ENCODE measurements at regions of chr14 and their contacts with region 1.

Region 1: DNA sequence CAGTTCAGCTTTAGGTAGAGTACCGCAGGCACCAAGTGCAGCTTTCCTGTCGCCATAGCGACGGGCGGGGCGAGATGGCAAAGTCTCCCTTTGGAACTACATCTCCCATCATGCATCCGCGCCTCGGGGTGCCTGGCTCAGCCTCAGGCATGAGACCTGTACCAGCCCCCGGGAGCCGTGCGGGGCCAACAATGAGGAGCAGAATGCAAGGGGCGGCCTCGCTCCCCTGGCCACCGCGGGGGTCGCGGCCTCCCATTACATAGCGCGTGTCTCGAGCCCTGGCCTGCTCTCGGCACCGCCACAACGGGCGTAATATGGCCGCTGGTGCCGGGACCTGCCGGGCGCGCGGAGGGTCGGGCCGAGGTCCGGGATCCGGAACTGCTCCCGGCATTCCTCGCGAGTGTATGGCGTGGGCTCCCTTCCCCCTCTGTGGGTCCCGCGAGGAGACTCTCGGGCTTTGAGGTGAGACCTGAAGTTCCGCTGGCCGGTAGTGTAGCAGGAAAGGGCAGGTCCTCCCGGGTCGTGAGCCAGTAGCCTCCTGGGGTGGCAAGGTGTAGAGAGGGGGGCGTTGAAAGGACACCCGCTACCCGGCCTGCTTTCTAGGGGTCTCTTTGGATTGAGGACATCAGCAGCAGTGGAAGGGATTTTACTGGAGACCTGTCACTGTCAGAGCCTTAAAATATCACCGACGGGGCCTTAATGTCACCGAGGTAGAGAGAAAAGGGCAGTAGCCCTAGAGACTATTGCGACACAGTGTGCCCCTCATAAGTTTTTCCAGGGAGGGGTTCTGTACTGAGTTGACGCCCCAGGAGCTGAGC is at the start of gene THTPA:
- DNase-seq: peak; percentile 91 to 95
- ATAC-seq: peak; percentile 86 to 90
- H3K4me3 ChIP-seq: peak within 1 kb of the TSS; percentile 93
- H3K27ac ChIP-seq: peak within 1 kb of the TSS; percentile 98 to 100
- H3K4me1 ChIP-seq: peaks cover 16% of the 10 kb centered on the region; the same call in 2 of the 3 replicates
- CTCF ChIP-seq: no peak
- EP300 ChIP-seq: no peak
- POLR2A ChIP-seq: peak; percentile 75
- RAD21 ChIP-seq: no peak
- polyA plus RNA-seq, gene THTPA: 8.1 and 15.3 TPM in 2 replicates

Region 2: DNA sequence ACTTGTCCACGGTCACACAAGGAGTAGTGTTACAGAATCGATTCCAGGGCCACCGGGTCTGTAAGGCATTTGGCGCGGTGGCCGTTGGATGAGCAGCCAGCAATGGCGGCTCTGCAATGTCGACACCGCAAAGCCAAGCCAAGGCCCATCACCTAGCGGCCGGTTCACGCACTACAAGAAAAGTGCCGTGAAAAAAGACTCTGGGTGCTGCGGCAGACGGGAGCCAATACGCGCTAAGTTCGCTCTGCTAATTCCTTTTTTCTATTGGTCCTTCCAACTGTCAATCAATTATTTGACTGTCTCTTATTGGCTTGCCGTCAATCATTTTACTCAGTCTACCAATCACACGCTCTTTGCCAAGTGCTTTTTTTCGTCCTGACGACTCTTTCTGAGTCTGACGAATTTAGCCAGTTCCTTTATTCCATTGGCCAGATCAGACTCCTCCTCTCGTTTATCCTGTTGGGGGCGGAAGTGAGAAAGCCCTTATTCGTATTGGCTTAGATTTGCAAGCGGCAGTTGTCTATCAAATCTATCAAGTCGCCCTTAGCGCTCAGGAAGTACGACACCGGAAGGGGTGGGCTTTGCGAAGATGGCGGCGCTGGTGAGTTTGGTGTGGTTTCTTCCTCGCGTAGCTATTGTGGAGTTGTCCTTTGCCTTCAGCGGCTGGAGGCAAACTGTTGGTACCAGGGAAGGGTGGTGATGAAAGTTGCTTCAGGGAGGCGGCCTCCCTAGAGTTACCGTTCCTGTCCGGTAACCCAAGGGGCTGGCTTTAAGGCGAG is 86.8 kb before region 1 on chr14 and contains the start of gene NGDN:
- CTCF ChIA-PET with region 1: interaction called, 553 read pairs
- POLR2A ChIA-PET with region 1: interaction called, 4 read pairs
- DNase-seq: peak; percentile 98 to 100
- ATAC-seq: peak; percentile 96 to 97
- H3K4me3 ChIP-seq: peak within 1 kb of the TSS; percentile 87
- H3K27ac ChIP-seq: peak within 1 kb of the TSS; percentile 77 to 87
- H3K4me1 ChIP-seq: peaks cover 10% of the 10 kb centered on the region; the same call in 2 of the 3 replicates
- CTCF ChIP-seq: peak; percentile 59
- EP300 ChIP-seq: no peak
- POLR2A ChIP-seq: peak; percentile 77
- RAD21 ChIP-seq: peak; percentile 30 to 39; a peak in 3 of 5 replicates
- polyA plus RNA-seq, gene NGDN: 99.5 and 108 TPM in 2 replicates

Region 3: DNA sequence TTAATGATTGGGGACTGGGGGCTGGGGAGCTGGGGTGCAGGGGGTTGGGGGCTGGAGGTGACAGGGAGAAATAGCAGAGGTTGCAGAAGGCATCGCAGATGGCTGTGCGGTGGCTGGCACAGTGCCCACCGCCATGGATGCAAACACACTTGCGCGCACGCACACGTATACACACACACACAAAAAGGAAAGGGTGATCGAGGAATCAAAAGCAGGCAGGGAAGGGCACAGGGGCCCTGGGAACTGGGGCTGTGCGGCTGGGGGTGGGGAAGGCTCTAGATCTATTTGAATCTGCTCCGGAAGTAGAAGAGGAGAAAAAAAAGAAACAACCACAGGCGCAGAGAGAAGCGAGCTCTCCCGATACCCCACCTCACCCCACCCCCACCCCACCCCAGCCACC is 43.9 kb before region 1 on chr14:
- CTCF ChIA-PET with region 1: interaction called, 19 read pairs
- POLR2A ChIA-PET with region 1: interaction called, 3 read pairs
- DNase-seq: no peak
- ATAC-seq: no peak
- H3K4me3 ChIP-seq: no peak overlapping the region
- H3K27ac ChIP-seq: no peak overlapping the region
- H3K4me1 ChIP-seq: no peaks in the 10 kb centered on the region
- CTCF ChIP-seq: no peak
- EP300 ChIP-seq: no peak
- POLR2A ChIP-seq: no peak
- RAD21 ChIP-seq: no peak

Region 4: DNA sequence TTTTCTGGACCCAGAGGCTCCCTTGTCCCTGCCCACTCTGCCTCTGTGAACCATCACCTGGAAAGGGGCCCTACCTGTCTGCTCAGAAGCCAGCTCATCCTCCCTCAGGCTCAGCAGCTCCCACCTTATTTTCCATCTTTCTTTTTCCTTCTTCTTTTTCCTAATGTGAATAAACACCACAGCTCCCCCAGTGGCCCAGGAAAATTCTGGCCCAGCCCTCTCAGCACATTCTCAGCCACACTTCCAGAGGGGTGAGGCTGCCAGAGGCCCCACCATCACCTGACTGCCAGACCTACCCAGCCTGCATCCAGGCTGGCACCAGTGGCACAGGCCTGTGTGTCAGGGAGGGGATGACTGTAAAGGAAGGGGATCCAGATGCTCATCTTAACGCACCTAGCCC is 27.5 kb before region 1 on chr14:
- CTCF ChIA-PET with region 1: interaction called, 16 read pairs
- POLR2A ChIA-PET with region 1: no interaction called
- DNase-seq: no peak
- ATAC-seq: peak; percentile 63 to 71; a peak in 5 of 6 replicates
- H3K4me3 ChIP-seq: no peak overlapping the region
- H3K27ac ChIP-seq: no peak overlapping the region
- H3K4me1 ChIP-seq: no peaks in the 10 kb centered on the region
- CTCF ChIP-seq: no peak
- EP300 ChIP-seq: no peak
- POLR2A ChIP-seq: no peak
- RAD21 ChIP-seq: no peak

Region 5: GRCh38 chr14:23539248-23540140 is 16.6 kb before region 1 on chr14:
- CTCF ChIA-PET with region 1: interaction called, 48 read pairs
- POLR2A ChIA-PET with region 1: interaction called, 5 read pairs
- DNase-seq: peak; percentile 45 to 61
- ATAC-seq: peak; percentile 79 to 91; a peak in 5 of 6 replicates
- H3K4me3 ChIP-seq: no peak overlapping the region
- H3K27ac ChIP-seq: no peak overlapping the region
- H3K4me1 ChIP-seq: no peaks in the 10 kb centered on the region
- CTCF ChIP-seq: peak; percentile 59
- EP300 ChIP-seq: no peak
- POLR2A ChIP-seq: no peak
- RAD21 ChIP-seq: peak; percentile 37 to 51; a peak in 2 of 5 replicates

Region 6: GRCh38 chr14:23580948-23581281 is 24.8 kb after region 1 on chr14:
- CTCF ChIA-PET with region 1: interaction called, 13 read pairs
- POLR2A ChIA-PET with region 1: no interaction called
- DNase-seq: peak in 1 of 2 experiments; percentile 46
- ATAC-seq: no peak; a peak in 1 of 6 replicates
- H3K4me3 ChIP-seq: no peak overlapping the region
- H3K27ac ChIP-seq: no peak overlapping the region
- H3K4me1 ChIP-seq: no peaks in the 10 kb centered on the region
- CTCF ChIP-seq: no peak
- EP300 ChIP-seq: no peak
- POLR2A ChIP-seq: no peak
- RAD21 ChIP-seq: no peak

Region 7: GRCh38 chr14:23793532-23793931 is 237.4 kb after region 1 on chr14:
- CTCF ChIA-PET with region 1: no interaction called
- POLR2A ChIA-PET with region 1: no interaction called
- DNase-seq: no peak
- ATAC-seq: no peak
- H3K4me3 ChIP-seq: no peak overlapping the region
- H3K27ac ChIP-seq: no peak overlapping the region
- H3K4me1 ChIP-seq: no peaks in the 10 kb centered on the region
- CTCF ChIP-seq: no peak
- EP300 ChIP-seq: no peak
- POLR2A ChIP-seq: no peak
- RAD21 ChIP-seq: no peak

Measured in A549 (cell line).